ENCODE measurements at regions of chr11 and their contacts with region 1.

Region 1: DNA sequence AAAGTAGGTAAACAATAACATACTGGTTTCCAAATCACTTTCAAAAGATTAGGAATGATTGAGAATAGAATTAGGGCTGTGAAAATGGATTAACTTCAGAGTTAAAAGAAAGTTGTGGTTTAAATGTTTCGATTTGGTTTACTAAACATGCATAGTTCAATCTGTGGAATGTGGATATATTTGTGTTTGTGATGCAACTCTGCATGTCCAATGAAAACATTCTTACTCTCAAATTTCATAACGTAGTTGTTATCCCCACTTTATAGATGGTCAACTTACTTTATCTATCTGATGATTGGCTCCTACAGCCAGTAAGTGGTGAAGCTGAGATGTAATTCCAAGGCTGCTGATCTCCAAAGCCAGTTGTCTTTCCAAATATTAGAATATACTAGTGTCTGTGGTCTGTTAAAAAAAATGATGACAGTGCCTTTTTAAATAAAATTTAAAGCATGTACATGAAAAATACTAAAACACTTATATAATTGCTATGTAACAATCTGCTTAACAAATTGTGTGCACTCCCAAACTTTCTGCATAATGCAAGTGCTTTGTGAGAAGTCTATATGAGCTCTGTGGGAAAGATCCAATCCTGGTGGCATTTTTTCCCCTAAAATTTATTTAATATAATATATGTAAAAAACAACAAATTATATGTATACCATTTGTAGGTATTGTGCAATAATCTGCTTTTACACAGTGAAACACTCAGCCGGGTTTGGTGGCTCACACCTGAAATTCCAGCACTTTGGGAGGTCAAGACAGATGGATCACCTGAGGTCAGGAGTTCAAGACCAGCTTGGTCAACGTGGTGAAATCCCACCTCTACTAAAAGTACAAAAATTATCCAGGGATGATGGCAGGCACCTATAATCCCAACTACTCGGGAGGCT is 9.7 kb upstream of the SIK3 start:
- DNase-seq: no peak
- H3K4me3 Mint-ChIP-seq: no peak overlapping the region
- H3K27ac Mint-ChIP-seq: no peak overlapping the region
- H3K4me1 Mint-ChIP-seq: peaks cover 5% of the 10 kb centered on the region
- H3K27me3 Mint-ChIP-seq: no peaks in the 10 kb centered on the region

Region 2: DNA sequence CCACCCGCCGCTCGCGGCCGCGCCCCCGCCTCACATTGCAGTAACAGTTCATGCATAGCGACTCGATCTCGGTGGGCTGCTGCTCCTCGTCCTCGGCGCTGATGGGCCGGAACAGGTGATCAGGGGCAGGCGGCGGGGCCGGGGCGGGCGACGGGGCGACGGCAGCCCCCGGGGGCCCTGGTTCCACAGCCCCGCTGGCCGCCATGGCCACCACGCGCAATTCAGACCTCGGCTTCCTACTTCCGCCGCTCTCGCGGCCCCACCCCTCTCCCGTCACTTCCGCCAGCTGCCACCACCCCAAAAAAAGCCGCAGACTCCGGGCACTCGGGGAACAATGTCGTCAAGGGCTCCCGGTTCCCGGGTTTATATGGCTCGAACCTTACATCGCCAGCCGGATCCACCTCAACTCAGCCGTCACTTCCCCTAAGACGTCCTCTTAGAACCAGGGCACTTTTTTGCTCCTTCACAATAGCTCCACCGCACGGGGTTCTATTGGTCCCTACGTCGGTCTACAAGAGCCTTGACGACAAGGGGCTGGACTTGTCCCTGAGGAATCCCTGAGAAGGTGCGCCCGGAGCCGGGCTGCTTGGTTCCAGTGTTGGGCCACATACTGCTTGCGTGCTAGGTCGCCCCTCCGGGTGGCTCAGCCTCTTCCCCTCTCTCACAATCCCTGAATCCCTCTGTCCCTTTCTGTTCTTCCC is 320.0 kb before region 1 on chr11 and contains the start of gene ZPR1:
- CTCF ChIA-PET with region 1: interaction called, 84 read pairs
- POLR2A ChIA-PET with region 1: interaction called, 4 read pairs
- DNase-seq: peak; percentile 89
- H3K4me3 Mint-ChIP-seq: peak within 1 kb of the TSS; percentile 91
- H3K27ac Mint-ChIP-seq: peak within 1 kb of the TSS; percentile 82
- H3K4me1 Mint-ChIP-seq: peaks cover 52% of the 10 kb centered on the region
- H3K27me3 Mint-ChIP-seq: peaks cover 9% of the 10 kb centered on the region
- total RNA-seq, gene ZPR1: 55.6 to 57.6 TPM

Region 3: GRCh38 chr11:116879800-116880625 is 227.9 kb before region 1 on chr11:
- CTCF ChIA-PET with region 1: interaction called, 76 read pairs
- POLR2A ChIA-PET with region 1: no interaction called
- DNase-seq: no peak
- H3K4me3 Mint-ChIP-seq: no peak overlapping the region
- H3K27ac Mint-ChIP-seq: peak overlapping the region; percentile 6
- H3K4me1 Mint-ChIP-seq: peaks cover 17% of the 10 kb centered on the region
- H3K27me3 Mint-ChIP-seq: no peaks in the 10 kb centered on the region

Region 4: DNA sequence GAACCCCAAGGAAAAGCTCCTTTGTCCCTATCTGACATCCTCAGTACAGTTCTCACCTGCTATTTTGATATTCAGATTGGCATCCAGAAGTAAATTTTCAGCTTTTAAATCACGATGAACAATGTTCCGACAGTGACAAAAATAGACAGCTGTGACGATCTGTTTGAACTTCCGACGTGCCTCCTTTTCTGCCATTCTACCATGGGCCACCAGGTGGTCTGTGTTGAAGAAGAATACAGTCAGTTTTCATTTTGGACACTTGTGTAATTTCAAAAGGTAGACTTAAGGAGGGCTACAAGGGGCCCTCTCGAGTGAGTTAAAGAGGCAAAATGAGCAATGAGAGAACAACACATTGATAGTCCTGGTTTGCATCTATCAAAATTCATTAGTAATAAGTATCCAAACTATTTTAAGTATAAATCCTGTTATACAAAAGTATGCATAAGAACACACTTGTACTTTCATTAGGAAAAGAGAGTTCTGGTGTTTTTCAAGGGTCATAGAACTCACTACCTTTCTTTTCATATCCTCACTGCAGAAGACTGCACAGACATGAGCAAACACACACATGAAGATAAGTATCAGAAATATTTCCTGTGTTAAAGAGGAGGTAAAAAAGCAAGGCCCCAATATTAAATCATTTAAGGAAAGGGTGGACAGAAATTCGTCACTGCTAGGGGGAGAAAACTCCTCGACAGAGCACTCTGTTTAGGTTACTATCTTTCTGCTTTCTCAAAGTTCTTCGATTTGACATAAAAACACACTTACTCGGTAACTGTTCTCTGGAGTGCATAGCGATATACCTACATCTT is 180.6 kb before region 1 on chr11:
- CTCF ChIA-PET with region 1: interaction called, 12 read pairs
- POLR2A ChIA-PET with region 1: no interaction called
- DNase-seq: peak; percentile 61
- H3K4me3 Mint-ChIP-seq: peak overlapping the region; percentile 36
- H3K27ac Mint-ChIP-seq: peak overlapping the region; percentile 86
- H3K4me1 Mint-ChIP-seq: peaks cover 81% of the 10 kb centered on the region
- H3K27me3 Mint-ChIP-seq: no peaks in the 10 kb centered on the region